Activated B cell treated with CpG ODN at 0.5 μM for 24 hours (primary cell): ENCODE measurements at regions of chr6 and their contacts with region 1.

Region 1: DNA sequence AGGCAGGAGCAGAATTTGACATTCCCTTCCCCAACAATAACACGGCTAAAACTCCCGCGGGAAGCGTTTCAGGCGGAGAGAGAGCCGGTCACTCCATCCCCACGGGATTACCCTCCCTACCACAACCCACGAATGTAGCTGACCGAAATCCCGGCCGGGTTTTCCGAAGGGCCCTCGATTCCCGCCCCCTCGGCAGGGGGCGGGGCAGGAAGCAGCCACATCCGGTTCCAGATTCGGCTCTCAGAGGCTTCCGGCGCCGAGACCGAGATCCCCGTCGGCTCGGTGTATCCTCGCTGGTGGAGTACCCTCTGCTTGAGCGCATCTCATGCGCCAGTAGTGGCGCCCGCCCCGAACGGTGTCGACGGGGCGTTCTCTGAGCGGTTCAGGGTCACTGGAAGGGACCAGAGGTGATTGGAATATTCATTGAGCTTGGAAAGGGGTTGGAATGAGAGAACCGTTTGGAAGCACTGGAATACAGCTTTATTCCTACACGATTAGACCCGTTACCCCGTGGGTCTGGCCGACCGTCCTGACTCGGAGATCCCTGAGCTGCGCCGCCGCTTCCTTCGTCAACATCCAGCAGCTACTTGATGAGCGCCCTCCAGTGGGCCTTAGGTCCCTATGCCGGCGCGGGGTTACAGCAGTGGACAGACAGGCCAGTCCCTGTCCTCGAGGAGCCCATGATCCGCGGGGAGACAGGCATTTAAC is 649 bp upstream of the RGL2 start:
- DNase-seq: peak; percentile 90
- ATAC-seq: peak; percentile 67
- H3K4me3 Mint-ChIP-seq: peak overlapping the region; percentile 96
- H3K27ac Mint-ChIP-seq: peak overlapping the region; percentile 98
- H3K4me1 Mint-ChIP-seq: peaks cover 34% of the 10 kb centered on the region
- H3K27me3 Mint-ChIP-seq: no peaks in the 10 kb centered on the region
- CTCF ChIP-seq: no peak

Region 2: GRCh38 chr6:33161354-33162331 is 137.7 kb before region 1 on chr6:
- CTCF ChIA-PET with region 1: no interaction called
- POLR2A ChIA-PET with region 1: no interaction called
- intact Hi-C with region 1: loop called (anchors 5 kb)
- DNase-seq: peak; percentile 84
- ATAC-seq: peak; percentile 98
- H3K4me3 Mint-ChIP-seq: peak overlapping the region; percentile 92
- H3K27ac Mint-ChIP-seq: peak overlapping the region; percentile 65
- H3K4me1 Mint-ChIP-seq: peaks cover 13% of the 10 kb centered on the region
- H3K27me3 Mint-ChIP-seq: peaks cover 1% of the 10 kb centered on the region
- CTCF ChIP-seq: peak; percentile 47

Region 3: DNA sequence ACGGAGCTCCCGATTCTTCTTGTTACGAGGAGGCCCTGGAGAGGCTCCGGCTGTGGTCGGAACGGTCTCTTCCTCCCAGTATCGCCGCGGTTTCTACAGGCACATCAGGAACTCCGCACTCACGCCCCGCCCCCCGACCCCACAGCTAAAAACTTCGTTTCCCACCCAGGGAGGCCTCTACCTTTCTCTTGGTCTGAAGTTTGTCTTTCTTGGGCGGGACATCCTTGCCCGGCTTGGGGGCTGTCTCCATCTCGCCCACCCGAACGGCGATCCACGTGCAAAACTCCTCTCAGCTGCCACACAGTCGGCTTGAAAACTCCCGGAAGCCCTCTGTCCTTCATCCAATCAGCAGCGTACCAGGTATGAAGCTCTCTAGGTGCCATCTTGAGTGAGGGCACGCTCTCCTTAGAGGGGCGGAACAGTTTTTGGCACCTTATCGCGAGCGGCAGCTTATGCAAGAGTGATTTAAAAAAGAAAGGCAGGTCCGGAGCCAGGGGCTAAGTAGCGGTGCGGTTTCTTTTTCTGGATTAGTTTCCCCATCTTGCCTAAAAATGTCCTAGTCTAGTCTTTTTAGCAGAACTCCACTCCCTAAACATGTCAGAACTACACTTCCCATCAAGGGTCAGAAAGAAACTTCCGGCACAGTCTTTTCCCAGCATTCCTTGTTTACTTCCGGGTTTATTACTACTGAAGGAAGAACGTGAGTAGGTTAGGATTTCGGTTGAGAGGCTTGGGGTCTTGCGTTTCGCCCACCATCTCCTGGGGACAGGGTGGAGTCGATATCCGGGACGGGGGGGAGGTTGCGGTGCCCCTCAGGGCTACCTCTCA is 10.3 kb before region 1 on chr6 and contains the starts of genes PFDN6 and WDR46:
- CTCF ChIA-PET with region 1: interaction called, 5 read pairs
- POLR2A ChIA-PET with region 1: interaction called, 47 read pairs
- intact Hi-C with region 1: loop called (anchors 1 kb)
- DNase-seq: peak; percentile 66
- ATAC-seq: peak; percentile 94
- H3K4me3 Mint-ChIP-seq: peak within 1 kb of the TSS; percentile 100
- H3K27ac Mint-ChIP-seq: peak within 1 kb of the TSS; percentile 95
- H3K4me1 Mint-ChIP-seq: peaks cover 48% of the 10 kb centered on the region
- H3K27me3 Mint-ChIP-seq: no peaks in the 10 kb centered on the region
- CTCF ChIP-seq: no peak
- total RNA-seq, gene PFDN6: 82.8 and 95.1 TPM in 2 replicates
- total RNA-seq, gene WDR46: 114 and 117 TPM in 2 replicates

Region 4: DNA sequence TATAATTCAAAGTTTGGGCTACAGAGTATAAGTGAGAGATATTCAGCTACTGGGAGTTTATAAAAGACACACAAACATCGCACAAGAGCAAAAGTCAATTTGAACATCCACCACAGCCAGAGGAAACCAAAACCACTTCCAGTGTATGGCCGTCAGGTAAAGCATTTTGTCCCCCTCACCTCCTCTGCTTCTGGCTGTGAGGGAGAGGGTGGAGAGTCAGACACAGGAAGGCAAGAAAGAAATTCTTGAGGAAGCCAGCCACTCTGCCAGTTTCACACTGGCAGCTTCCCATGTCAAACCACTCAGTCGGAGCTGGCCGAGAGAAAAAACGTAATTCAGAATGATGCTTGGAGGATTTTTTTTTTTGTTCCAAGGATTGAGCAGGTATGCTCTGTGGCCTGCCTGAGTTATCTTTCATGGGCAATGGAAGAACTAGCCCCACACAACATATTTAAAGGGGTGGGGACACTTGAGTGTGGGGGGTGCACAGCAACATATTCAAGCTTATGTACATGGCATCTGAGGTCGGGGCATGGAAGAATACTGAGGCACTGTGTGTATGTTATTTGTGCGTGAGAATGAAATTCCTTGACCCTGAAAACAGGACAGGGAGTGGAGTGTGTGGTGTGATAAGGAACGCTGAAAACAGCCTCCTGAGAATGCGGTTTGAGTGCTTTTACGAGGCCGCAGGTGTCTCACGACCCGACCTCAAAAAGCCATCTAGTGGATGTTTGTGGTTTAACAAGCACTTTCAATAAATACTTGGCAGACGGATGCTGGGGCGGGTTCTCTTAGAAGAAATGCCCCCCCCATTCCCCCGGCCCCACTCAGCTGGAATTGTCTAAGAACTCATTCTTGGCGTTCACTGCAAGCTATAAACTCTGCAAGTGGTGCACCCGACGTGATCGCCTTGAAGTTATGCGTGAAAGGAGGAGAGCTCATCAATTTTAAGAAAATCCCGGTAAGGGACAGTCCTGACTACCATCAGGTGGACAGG is 45.6 kb after region 1 on chr6:
- CTCF ChIA-PET with region 1: interaction called, 17 read pairs
- POLR2A ChIA-PET with region 1: interaction called, 84 read pairs
- intact Hi-C with region 1: loop called (anchors 1 kb)
- DNase-seq: peak; percentile 31
- ATAC-seq: peak; percentile 35
- H3K4me3 Mint-ChIP-seq: peak overlapping the region; percentile 80
- H3K27ac Mint-ChIP-seq: peak overlapping the region; percentile 92
- H3K4me1 Mint-ChIP-seq: peaks cover 35% of the 10 kb centered on the region
- H3K27me3 Mint-ChIP-seq: no peaks in the 10 kb centered on the region
- CTCF ChIP-seq: no peak